AG04449 (cell line): ENCODE measurements at regions of chr1 and their contacts with region 1.

Region 1: DNA sequence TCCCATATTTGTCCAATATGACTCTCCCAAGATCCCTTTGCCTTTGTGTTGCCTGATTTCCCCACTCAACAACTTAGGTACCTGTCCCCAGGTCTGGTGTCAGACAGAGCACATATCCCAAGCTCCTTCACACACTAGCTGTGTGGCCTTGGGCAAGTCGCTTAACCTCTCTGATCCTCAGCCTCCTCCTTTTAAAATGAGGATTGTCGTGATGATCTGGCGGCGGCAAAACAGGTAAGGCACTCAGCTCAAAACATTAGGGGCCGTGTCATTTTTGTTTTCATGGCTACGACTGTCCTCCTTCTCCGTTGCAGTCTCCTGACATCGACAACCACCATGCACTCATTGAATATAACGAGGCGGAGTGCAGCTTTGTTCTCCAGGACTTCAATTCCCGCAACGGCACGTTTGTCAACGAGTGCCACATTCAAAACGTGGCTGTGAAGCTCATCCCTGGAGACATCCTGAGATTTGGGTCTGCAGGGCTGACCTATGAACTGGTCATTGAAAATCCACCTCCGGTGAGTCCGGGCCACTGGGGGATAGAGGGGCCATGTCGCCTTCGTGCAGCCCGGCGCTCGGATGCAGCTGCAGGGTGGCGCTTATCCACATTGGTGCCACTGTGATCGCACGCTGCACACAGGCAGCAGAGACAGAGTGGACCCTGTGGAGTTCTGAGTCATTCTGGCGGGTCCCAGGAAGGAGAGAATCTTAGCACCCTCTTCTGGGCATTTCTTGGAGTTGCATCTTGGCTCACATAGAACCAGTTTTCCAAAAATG is 25.2 kb downstream of the FHAD1 start:
- DNase-seq: peak; percentile 10
- H3K4me3 ChIP-seq: no peak overlapping the region
- CTCF ChIP-seq: peak; percentile 74

Region 2: GRCh38 chr1:15128520-15129313 is 143.5 kb before region 1 on chr1:
- CTCF ChIA-PET with region 1: interaction called, 251 read pairs
- POLR2A ChIA-PET with region 1: no interaction called
- DNase-seq: no peak
- H3K4me3 ChIP-seq: no peak overlapping the region
- CTCF ChIP-seq: peak; percentile 91

Region 3: DNA sequence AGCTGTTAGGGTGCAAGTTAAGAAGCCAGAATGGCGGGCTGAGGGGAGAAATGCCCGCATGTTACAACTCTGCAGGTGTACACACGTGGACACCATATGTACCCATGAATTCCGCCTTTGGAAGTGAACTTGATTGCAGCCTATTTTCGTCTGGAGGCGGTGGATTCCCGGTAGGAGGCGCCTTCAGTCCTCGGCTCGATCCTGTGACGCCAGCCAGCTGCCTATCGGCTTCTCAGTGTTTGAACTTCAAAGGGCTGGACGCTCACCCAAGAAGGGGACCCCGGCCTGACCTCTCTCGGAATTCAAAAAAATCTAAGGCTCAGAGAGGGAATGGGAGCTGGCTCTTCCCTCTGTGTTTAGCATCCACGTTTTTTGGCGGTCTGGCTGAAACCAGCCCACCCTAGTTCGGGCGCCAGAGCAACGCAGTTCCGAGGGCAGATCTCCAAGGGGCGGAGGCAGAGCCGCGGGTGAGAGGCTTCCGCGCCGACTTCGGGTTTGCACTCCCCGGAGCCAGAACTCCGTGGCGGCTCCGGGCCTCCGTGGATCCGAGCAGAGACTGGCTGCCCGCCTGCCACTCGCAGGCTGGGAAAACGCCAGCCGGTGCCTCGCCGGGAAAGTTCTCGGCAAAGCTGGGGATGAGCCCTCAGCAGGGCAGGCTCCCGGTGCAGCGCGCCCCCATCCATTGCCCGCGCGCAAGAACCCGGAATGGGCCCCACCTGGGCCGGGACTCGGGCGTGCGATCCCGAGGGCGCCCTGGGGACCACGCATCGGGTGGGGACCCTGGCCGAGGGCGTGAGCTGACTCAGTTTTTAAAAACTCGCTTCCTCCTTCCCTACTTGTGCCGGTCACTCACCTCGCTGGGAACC is 119.6 kb before region 1 on chr1:
- CTCF ChIA-PET with region 1: interaction called, 186 read pairs
- POLR2A ChIA-PET with region 1: no interaction called
- DNase-seq: peak; percentile 31
- H3K4me3 ChIP-seq: peak overlapping the region; percentile 58
- CTCF ChIP-seq: peak; percentile 76

Region 4: GRCh38 chr1:15283526-15283925 is 11.3 kb after region 1 on chr1:
- CTCF ChIA-PET with region 1: interaction called, 18 read pairs
- POLR2A ChIA-PET with region 1: no interaction called
- DNase-seq: no peak
- H3K4me3 ChIP-seq: no peak overlapping the region
- CTCF ChIP-seq: no peak

Region 5: DNA sequence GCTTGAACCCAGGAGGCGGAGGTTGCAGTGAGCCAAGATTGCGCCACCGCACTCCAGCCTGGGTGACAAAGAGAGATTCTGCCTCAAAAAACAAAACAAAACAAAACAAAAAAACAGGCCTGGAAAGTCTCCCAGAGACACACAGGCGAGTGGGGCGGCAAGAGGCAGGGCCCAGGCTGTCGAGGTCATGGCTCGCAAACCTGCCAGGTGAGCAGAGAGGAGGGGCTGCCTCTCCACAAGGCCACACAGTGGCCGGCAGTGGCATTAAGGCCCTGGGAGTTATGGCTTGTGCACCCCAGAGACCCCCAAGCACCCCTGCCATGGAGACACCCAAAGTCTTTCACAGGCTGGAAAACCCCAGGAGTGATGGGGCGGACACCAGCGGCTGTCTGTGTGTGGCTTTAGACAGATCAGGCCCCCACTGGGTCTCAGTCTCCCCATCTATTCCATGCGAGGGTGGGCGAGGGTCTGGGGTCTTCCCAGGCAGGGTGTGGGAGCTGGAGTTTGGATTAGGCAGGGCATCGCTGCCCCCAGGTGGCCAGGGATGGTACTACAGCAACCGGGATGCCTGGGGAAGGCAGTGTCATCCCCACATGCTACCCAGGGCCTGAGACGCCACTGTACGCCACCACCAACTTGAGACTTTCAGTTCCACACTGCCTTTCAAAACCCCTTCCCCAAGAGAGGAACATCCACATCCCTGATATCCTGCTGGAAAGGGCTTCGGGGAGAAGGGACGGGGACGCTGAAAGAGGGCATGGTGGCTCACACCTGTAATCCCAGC is 158.8 kb after region 1 on chr1:
- CTCF ChIA-PET with region 1: interaction called, 14 read pairs
- POLR2A ChIA-PET with region 1: no interaction called
- DNase-seq: no peak
- H3K4me3 ChIP-seq: no peak overlapping the region
- CTCF ChIP-seq: peak; percentile 93